Activated CD8-positive, alpha-beta T cell treated with anti-CD3 and anti-CD28 coated beads, Interleukin-2, amount 10 ng/mL, durations not matched to agents 7 days and 5 days (primary cell): ENCODE measurements at regions of chr6 and their contacts with region 1.

Region 1: DNA sequence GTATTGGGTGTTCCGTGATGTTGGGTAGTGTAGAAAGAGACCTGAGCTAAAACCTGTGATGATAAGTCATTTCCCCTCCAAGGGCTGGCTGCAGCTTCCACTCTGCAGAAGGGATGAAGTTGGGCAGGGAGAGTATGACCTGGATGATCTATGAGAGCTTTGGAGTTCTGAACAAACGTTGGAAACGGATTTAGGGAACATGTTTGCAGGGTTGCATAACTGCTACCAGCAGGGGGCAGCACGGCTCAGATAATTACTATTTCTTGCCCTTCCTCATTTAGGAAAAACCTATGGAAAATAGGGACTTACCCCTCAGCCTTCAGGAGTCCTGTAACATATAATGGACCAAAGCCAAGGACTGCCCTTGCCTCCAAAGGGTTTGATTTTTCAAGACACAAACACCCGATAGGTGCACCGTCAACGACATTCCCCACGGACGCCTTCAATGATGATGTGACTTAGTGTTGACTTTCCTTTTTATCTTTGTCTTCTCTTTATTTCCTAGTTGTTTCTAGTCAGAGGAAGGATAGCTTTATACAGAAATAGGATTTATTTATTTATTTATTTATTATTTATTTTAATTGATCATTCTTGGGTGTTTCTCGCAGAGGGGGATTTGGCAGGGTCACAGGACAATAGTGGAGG is 164.9 kb upstream of the SASH1 start:
- DNase-seq: peak; percentile 33
- ATAC-seq: no peak
- H3K4me3 Mint-ChIP-seq: no peak overlapping the region
- H3K27ac Mint-ChIP-seq: no peak overlapping the region
- H3K4me1 Mint-ChIP-seq: no peaks in the 10 kb centered on the region
- H3K27me3 Mint-ChIP-seq: peaks cover 8% of the 10 kb centered on the region

Region 2: DNA sequence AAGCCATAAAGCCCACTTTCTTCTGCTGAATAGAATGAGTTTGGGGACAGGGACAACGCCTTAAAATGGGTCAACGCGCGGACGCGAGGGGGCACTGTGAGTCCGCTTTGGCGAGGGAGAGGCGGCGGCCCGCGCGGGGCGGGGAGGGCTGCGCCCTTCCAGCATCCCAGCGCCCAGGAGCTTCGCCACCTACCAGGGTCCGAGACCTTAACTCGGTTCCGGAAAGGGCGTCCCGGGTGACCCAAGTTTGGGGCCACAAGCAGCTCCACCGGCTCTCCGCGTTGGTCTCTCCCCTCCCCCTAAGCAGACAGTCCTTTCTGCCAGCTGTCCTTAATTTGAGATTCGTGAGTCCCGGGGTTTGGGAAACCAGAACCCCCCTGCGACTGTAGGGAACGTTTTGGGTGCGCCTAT is 671.0 kb before region 1 on chr6:
- CTCF ChIA-PET with region 1: interaction called, 11 read pairs
- POLR2A ChIA-PET with region 1: no interaction called
- DNase-seq: peak; percentile 57
- ATAC-seq: peak; percentile 37
- H3K4me3 Mint-ChIP-seq: no peak overlapping the region
- H3K27ac Mint-ChIP-seq: no peak overlapping the region
- H3K4me1 Mint-ChIP-seq: peaks cover 11% of the 10 kb centered on the region
- H3K27me3 Mint-ChIP-seq: peaks cover 47% of the 10 kb centered on the region

Region 3: DNA sequence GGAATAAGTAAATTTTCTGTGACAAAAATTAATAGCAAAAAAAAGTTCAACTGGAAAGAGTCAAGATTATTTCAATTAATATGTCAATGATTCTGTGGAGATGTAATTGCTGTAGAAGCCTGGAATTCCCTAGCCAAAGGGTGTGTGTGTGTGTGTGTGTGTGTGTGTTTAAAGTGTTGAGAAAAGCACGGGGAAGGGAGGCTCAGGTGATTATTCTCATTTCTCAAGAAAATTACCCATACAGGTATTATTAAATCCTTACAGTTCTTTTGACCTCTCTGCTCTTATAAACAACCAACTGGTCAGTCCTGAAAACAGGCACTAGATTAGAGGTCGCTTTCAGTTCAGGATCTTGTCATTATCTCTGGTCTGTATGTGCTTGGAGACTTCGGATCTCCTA is 35.7 kb after region 1 on chr6:
- CTCF ChIA-PET with region 1: no interaction called
- POLR2A ChIA-PET with region 1: no interaction called
- DNase-seq: no peak
- ATAC-seq: no peak
- H3K4me3 Mint-ChIP-seq: no peak overlapping the region
- H3K27ac Mint-ChIP-seq: no peak overlapping the region
- H3K4me1 Mint-ChIP-seq: no peaks in the 10 kb centered on the region
- H3K27me3 Mint-ChIP-seq: peaks cover 41% of the 10 kb centered on the region

Region 4: GRCh38 chr6:148250975-148251685 is 73.4 kb after region 1 on chr6:
- CTCF ChIA-PET with region 1: interaction called, 13 read pairs
- POLR2A ChIA-PET with region 1: no interaction called
- DNase-seq: no peak
- ATAC-seq: no peak
- H3K4me3 Mint-ChIP-seq: no peak overlapping the region
- H3K27ac Mint-ChIP-seq: no peak overlapping the region
- H3K4me1 Mint-ChIP-seq: no peaks in the 10 kb centered on the region
- H3K27me3 Mint-ChIP-seq: peaks cover 4% of the 10 kb centered on the region

Region 5: GRCh38 chr6:148293181-148293995 is 115.7 kb after region 1 on chr6:
- CTCF ChIA-PET with region 1: no interaction called
- POLR2A ChIA-PET with region 1: no interaction called
- DNase-seq: no peak
- ATAC-seq: no peak
- H3K4me3 Mint-ChIP-seq: no peak overlapping the region
- H3K27ac Mint-ChIP-seq: no peak overlapping the region
- H3K4me1 Mint-ChIP-seq: no peaks in the 10 kb centered on the region
- H3K27me3 Mint-ChIP-seq: no peaks in the 10 kb centered on the region

Region 6: DNA sequence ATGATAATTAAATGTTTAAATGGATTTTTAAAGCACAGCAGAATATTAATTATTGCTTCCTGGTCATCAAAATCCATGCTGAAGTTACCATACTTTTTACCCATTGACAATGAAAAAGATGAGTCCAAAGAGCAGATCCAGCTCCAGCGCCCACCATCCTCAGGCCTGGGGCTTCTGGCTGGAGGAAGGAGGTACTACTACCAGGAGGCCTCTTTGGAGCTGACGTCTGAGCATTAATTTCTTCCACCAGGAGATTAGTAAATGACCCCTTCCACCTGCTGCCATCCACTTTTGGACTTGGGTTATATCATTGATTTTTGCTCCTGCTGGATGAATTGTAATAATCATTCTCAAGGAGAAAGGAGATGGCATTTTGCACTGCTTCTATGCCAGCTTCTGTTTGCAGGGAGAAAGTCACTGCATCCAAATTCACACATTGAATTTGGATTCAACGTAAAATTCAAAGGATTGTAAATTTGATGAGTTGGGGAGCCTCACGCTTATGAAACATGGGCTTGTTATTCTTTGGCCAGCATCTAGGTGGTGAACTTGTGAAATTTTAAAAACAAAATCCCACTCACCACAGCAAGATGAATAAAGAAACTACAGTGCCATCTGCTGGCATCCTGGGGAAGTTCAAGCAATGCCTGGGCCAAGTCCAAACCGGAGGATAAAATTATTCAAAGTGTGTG is 286.8 kb after region 1 on chr6:
- CTCF ChIA-PET with region 1: interaction called, 13 read pairs
- POLR2A ChIA-PET with region 1: no interaction called
- DNase-seq: peak; percentile 68
- ATAC-seq: no peak
- H3K4me3 Mint-ChIP-seq: no peak overlapping the region
- H3K27ac Mint-ChIP-seq: no peak overlapping the region
- H3K4me1 Mint-ChIP-seq: no peaks in the 10 kb centered on the region
- H3K27me3 Mint-ChIP-seq: peaks cover 12% of the 10 kb centered on the region